Panc1 (cell line): ENCODE measurements at regions of chr17 and their contacts with region 1.

Region 1: DNA sequence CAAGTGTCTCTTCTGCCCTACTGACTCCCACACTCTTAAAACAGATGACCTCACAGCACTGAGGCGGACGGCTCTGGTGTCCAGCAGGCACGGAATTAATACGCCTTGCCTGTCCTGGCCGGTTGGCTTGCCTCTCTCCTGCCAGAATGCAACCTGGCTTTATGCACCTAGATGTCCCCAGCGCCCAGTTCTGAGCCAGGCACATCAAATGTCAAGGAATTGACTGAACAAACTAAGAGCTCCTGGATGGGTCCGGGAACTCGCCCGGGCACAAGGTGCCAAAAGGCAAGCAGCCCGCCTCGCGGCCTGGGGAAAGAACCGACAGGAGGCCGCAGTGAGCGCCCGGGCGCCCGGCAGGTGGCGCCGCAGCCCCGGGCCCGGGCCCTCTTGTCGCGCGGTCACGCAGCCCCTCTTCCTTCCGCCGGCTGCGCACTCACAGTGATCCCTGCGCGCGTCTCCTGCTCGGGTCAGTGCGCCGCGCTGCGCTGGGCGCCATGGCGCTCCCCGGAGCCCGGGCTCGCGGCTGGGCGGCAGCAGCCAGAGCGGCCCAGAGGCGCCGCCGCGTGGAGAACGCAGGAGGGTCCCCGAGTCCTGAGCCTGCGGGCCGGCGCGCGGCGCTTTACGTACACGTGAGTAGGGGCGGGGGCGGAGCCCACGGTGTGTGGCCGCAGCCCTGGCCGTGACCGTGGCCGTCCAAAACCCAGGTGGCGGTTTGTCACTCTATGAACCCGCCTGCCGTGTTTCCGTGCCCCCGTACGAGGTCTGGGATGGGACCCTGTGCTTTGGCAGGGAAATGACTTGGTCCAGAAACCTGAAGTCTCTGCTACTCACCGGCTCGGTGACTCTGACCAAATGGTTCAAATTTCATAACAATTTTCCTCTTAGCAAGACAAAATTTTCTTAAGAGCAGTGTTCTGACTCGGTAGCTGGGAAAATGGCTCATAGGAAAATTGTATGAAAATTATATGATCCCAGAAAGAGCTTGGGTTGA is at the start of gene RSAD1:
- DNase-seq: no peak
- ATAC-seq: peak; percentile 89
- H3K4me3 ChIP-seq: peak within 1 kb of the TSS; percentile 88 to 98
- H3K27ac ChIP-seq: peak within 1 kb of the TSS; percentile 93
- H3K4me1 ChIP-seq: peaks cover 30% of the 10 kb centered on the region
- H3K27me3 ChIP-seq: no peaks in the 10 kb centered on the region
- CTCF ChIP-seq: peak; percentile 100
- total RNA-seq, gene RSAD1: 40.2 TPM

Region 2: DNA sequence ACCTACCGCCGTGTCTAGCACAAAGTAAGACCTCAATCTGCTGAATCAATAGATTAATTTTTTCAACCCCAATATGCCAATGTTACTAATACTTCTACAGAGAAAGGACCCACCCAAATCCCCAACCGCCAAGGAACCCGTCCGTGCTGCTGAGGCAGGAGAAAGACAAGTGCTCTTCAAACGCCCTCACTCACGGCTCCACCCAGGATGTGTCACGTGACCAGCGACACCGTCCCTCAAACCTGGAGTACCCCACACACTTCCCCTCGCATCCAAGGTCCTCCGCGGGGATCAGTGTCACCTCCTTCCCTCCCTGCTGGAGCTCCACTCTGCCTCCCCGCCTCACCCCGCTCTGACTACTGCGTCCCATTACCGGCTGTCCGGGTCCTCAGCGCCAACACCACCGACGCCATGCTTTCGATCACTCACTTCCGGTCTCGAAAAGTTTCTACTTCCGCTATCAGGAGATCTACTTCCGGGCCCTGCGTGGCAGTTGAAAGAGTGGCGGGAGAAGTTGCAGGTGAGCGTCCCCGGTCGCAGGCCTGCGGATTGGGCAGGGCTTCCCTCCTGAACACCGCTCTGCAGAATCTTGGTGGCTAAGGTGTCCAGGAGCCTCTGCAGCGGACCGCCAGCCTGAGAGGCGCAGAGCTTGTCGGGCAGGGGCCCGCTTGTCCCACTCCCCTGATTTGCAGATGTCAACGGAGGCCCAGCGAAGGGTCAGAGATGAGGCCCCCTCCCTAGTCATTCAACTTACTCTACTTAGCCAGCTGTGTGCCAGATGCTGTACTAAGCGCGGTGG is 105.7 kb before region 1 on chr17 and contains the starts of genes EME1 and MRPL27:
- CTCF ChIA-PET with region 1: interaction called, 16 read pairs
- POLR2A ChIA-PET with region 1: no interaction called
- in situ Hi-C with region 1: no loop called
- intact Hi-C with region 1: no loop called
- DNase-seq: peak; percentile 80
- ATAC-seq: peak; percentile 98
- H3K4me3 ChIP-seq: peak within 1 kb of the TSS; percentile 53 to 95
- H3K27ac ChIP-seq: peak within 1 kb of the TSS; percentile 86
- H3K4me1 ChIP-seq: peaks cover 5% of the 10 kb centered on the region
- H3K27me3 ChIP-seq: no peaks in the 10 kb centered on the region
- CTCF ChIP-seq: no peak
- total RNA-seq, gene EME1: 15.3 TPM
- total RNA-seq, gene MRPL27: 136 TPM

Region 3: GRCh38 chr17:50421308-50422051 is 57.2 kb before region 1 on chr17:
- CTCF ChIA-PET with region 1: no interaction called
- POLR2A ChIA-PET with region 1: no interaction called
- in situ Hi-C with region 1: no loop called
- intact Hi-C with region 1: no loop called
- DNase-seq: no peak
- ATAC-seq: no peak
- H3K4me3 ChIP-seq: peak overlapping the region; percentile 1 to 4; a peak in 2 of 4 replicates
- H3K27ac ChIP-seq: 0 out of 2 replicates have a peak overlapping the region, but pooled peaks have one; percentile 7
- H3K4me1 ChIP-seq: peaks cover 9% of the 10 kb centered on the region
- H3K27me3 ChIP-seq: no peaks in the 10 kb centered on the region
- CTCF ChIP-seq: no peak

Region 4: GRCh38 chr17:50495918-50496317 is 17.2 kb after region 1 on chr17:
- CTCF ChIA-PET with region 1: interaction called, 11 read pairs
- POLR2A ChIA-PET with region 1: no interaction called
- in situ Hi-C with region 1: no loop called
- intact Hi-C with region 1: no loop called
- DNase-seq: no peak
- ATAC-seq: no peak
- H3K4me3 ChIP-seq: no peak overlapping the region
- H3K27ac ChIP-seq: no peak overlapping the region
- H3K4me1 ChIP-seq: no peaks in the 10 kb centered on the region
- H3K27me3 ChIP-seq: no peaks in the 10 kb centered on the region
- CTCF ChIP-seq: no peak

Region 5: DNA sequence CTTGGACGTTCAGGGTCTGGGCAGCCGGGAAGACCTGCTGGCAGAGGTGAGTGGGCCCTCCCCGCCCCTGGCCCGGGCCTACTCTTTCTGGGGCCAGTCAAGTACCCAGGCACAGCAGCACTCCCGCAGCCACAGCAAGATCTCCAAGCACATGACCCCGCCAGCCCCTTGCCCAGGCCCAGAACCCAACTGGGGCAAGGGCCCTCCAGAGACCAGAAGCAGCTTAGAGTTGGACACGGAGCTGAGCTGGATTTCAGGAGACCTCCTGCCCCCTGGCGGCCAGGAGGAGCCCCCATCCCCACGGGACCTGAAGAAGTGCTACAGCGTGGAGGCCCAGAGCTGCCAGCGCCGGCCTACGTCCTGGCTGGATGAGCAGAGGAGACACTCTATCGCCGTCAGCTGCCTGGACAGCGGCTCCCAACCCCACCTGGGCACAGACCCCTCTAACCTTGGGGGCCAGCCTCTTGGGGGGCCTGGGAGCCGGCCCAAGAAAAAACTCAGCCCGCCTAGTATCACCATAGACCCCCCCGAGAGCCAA is 147.4 kb after region 1 on chr17:
- CTCF ChIA-PET with region 1: interaction called, 17 read pairs
- POLR2A ChIA-PET with region 1: no interaction called
- in situ Hi-C with region 1: no loop called
- intact Hi-C with region 1: loop called (anchors 5 kb)
- DNase-seq: no peak
- ATAC-seq: peak; percentile 82
- H3K4me3 ChIP-seq: no peak overlapping the region
- H3K27ac ChIP-seq: peak overlapping the region; percentile 55
- H3K4me1 ChIP-seq: peaks cover 66% of the 10 kb centered on the region
- H3K27me3 ChIP-seq: no peaks in the 10 kb centered on the region
- CTCF ChIP-seq: peak; percentile 92